Activated CD4-positive, alpha-beta T cell treated with anti-CD3 and anti-CD28 coated beads for 36 hours (primary cell): ENCODE measurements at regions of chr16 and their contacts with region 1.

Region 1: GRCh38 chr16:50245417-50246298 is 20.7 kb upstream of the ADCY7 start:
- DNase-seq: peak; percentile 83
- ATAC-seq: peak; percentile 91
- H3K4me3 Mint-ChIP-seq: peak overlapping the region; percentile 76
- H3K27ac Mint-ChIP-seq: peak overlapping the region; percentile 83
- H3K4me1 Mint-ChIP-seq: peaks cover 16% of the 10 kb centered on the region
- H3K27me3 Mint-ChIP-seq: no peaks in the 10 kb centered on the region

Region 2: DNA sequence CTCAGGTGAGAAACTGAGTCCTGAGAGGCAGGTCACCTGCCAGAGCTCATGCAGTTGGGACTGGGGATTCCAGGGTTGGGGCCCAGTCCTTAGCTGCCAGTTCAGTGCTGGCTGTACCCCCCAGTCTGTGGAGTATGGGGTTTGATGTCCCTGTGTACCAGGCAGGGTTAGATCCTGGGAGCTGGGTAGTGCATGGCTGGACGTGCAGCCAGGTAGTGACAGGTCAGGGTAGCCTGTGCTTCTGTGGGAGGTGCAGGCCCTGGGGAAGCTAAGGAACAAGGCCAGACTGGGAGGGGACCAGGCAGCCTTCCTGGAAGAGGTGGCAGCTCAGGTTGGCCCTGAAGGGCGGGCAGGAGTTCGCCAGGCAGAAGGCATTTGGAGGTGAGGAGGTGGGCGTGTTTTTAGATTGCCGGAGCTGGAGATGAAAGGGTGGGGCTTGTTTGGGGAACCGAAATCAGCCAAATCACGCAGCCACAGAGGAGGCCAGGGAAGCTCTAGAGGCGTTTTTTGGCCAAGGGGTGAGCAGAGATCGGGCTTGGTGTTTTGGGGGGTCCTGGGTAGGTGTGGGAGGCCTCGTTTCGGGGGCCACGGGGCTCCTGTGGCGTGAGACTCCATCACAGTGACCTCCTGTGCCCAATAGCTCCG is 28.1 kb after region 1 on chr16:
- CTCF ChIA-PET with region 1: interaction called, 3 read pairs
- POLR2A ChIA-PET with region 1: interaction called, 4 read pairs
- intact Hi-C with region 1: loop called in 1 of 2 experiments (anchors 2 kb)
- DNase-seq: peak; percentile 73
- ATAC-seq: peak; percentile 37
- H3K4me3 Mint-ChIP-seq: peak overlapping the region; percentile 97
- H3K27ac Mint-ChIP-seq: peak overlapping the region; percentile 100
- H3K4me1 Mint-ChIP-seq: peaks cover 92% of the 10 kb centered on the region
- H3K27me3 Mint-ChIP-seq: no peaks in the 10 kb centered on the region